Stomach (tissue), 19 donors: ENCODE measurements at regions of chr7 and their contacts with region 1.

Region 1: GRCh38 chr7:137996378-137996851 is 5.5 kb downstream of the CREB3L2 start:
- DNase-seq: peak; percentile 34 to 46
- H3K4me3 ChIP-seq: peak overlapping the region in 1 of 4 donors; percentile 8
- H3K27ac ChIP-seq: peak overlapping the region; percentile 3 to 97 (median 45)
- H3K4me1 ChIP-seq: peaks cover 56 to 90% (median 77%) of the 10 kb centered on the region in 4 donors
- H3K27me3 ChIP-seq: no peaks in the 10 kb centered on the region
- CTCF ChIP-seq: no peak
- EP300 ChIP-seq: no peak
- POLR2A ChIP-seq: no peak

Region 2: GRCh38 chr7:137916980-137917645 is 79.3 kb before region 1 on chr7:
- intact Hi-C with region 1: loop called (anchors 5 kb)
- DNase-seq: no peak
- H3K4me3 ChIP-seq: no peak overlapping the region
- H3K27ac ChIP-seq: peak overlapping the region in 1 of 5 donors; percentile 19
- H3K4me1 ChIP-seq: peaks cover 0 to 30% (median 13%) of the 10 kb centered on the region in 4 donors
- H3K27me3 ChIP-seq: no peaks in the 10 kb centered on the region
- CTCF ChIP-seq: no peak
- EP300 ChIP-seq: no peak
- POLR2A ChIP-seq: no peak